CD4-positive, alpha-beta memory T cell (primary cell): ENCODE measurements at regions of chr2 and their contacts with region 1.

Region 1: DNA sequence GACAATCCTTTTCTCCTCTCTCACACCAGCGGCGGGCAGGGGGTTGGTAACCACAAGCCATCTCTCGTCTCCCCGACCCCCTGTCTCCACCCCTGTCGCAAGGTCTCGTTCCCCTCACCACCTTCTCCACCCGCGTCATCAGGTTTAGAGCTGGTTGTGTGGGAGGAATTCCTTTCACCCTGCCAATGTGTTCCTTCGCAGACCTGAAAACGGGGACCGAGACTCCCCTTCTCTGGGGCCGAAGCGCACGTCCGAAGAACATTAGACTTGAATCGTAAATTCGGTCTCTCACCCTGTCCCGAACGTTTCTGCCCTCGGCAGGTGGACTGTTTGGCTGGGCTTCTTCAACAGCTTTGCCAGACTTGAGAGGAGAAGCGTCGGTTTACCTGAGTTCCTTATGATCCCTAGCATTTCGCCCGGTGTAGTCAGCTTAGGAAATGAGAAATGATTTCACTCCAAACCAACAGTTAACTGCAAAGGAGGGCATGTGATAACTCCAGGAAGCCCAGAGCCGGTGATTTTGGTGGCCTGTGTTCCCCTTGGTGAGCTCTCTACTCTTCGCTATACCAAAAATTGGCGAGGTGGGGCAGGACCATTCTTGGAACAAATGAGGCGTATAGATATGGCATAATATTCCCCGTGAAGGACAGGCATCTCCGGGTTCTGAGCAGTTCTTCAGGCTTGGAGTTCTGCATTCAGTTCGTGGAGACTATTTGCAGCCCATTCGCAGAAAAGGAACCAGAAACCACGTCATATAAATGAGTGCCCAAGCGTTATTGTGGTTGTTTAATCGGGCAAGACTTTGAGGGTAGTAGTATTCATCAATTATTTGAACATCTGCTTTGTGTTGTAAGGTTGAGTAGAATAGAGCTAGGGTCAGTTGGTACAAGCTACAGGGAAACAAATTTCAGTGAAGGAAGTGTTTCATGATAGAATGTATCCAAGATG is 694 bp downstream of the CFAP36 start:
- DNase-seq: peak in 2 of 5 donors; percentile 30 to 67
- H3K4me3 ChIP-seq: peak overlapping the region; percentile 69 to 84
- H3K4me3 Mint-ChIP-seq: peak overlapping the region; percentile 95 to 100 (median 98)
- H3K27ac ChIP-seq: peak overlapping the region; percentile 83
- H3K27ac Mint-ChIP-seq: peak overlapping the region; percentile 98 to 100 (median 99)
- H3K4me1 ChIP-seq: peaks cover 22% of the 10 kb centered on the region
- H3K4me1 Mint-ChIP-seq: peaks cover 11 to 23% (median 19%) of the 10 kb centered on the region in 4 donors
- H3K27me3 ChIP-seq: no peaks in the 10 kb centered on the region
- H3K27me3 Mint-ChIP-seq: no peaks in the 10 kb centered on the region

Region 2: GRCh38 chr2:53970724-53971602 is 1549.2 kb before region 1 on chr2 and contains the start of gene PSME4:
- CTCF ChIA-PET with region 1: no interaction called
- POLR2A ChIA-PET with region 1: no interaction called
- intact Hi-C with region 1: loop called (anchors 2 kb)
- DNase-seq: peak; percentile 89 to 94 (median 89)
- H3K4me3 ChIP-seq: peak within 1 kb of the TSS; percentile 97 to 99
- H3K4me3 Mint-ChIP-seq: peak within 1 kb of the TSS; percentile 89 to 100 (median 96)
- H3K27ac ChIP-seq: peak within 1 kb of the TSS; percentile 90
- H3K27ac Mint-ChIP-seq: peak within 1 kb of the TSS; percentile 93 to 99 (median 98)
- H3K4me1 ChIP-seq: peaks cover 51% of the 10 kb centered on the region
- H3K4me1 Mint-ChIP-seq: peaks cover 41 to 67% (median 48%) of the 10 kb centered on the region in 4 donors
- H3K27me3 ChIP-seq: no peaks in the 10 kb centered on the region
- H3K27me3 Mint-ChIP-seq: no peaks in the 10 kb centered on the region
- total RNA-seq, gene PSME4: 41.7 to 49.9 TPM

Region 3: DNA sequence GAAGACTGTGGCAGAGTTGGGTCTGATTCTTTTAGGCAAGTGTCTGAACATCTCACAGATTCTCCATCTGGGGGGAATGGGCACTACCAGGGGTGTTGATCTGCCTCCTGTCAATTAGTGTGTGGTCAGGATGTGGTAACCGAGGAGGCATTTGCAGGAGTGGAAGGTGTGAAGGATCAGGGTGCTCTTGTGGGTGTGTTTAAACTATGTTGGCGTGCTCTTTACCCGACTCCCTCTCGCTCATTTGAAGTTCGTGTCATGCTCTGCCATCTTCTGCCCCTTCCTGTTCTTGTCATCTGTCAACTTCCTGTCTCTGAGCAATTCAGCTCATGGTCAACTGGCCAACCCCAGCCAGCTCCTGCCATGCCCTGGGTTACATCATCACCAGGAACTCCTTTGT is 577.8 kb before region 1 on chr2:
- CTCF ChIA-PET with region 1: no interaction called
- POLR2A ChIA-PET with region 1: no interaction called
- intact Hi-C with region 1: no loop called
- DNase-seq: peak; percentile 45 to 66 (median 57)
- H3K4me3 ChIP-seq: no peak overlapping the region
- H3K4me3 Mint-ChIP-seq: no peak overlapping the region
- H3K27ac ChIP-seq: no peak overlapping the region
- H3K27ac Mint-ChIP-seq: no peak overlapping the region
- H3K4me1 ChIP-seq: peaks cover 22% of the 10 kb centered on the region
- H3K4me1 Mint-ChIP-seq: peaks cover 3 to 11% (median 5%) of the 10 kb centered on the region in 4 donors
- H3K27me3 ChIP-seq: no peaks in the 10 kb centered on the region
- H3K27me3 Mint-ChIP-seq: no peaks in the 10 kb centered on the region

Region 4: GRCh38 chr2:55223958-55224760 is 296.1 kb before region 1 on chr2:
- CTCF ChIA-PET with region 1: no interaction called
- POLR2A ChIA-PET with region 1: interaction called, 18 read pairs
- intact Hi-C with region 1: no loop called
- DNase-seq: peak in 2 of 5 donors; percentile 21 to 39
- H3K4me3 ChIP-seq: no peak overlapping the region
- H3K4me3 Mint-ChIP-seq: peak overlapping the region; percentile 79 to 90 (median 86)
- H3K27ac ChIP-seq: peak overlapping the region; percentile 84
- H3K27ac Mint-ChIP-seq: peak overlapping the region; percentile 85 to 95 (median 93)
- H3K4me1 ChIP-seq: peaks cover 40% of the 10 kb centered on the region
- H3K4me1 Mint-ChIP-seq: peaks cover 32 to 55% (median 41%) of the 10 kb centered on the region in 4 donors
- H3K27me3 ChIP-seq: no peaks in the 10 kb centered on the region
- H3K27me3 Mint-ChIP-seq: no peaks in the 10 kb centered on the region

Region 5: DNA sequence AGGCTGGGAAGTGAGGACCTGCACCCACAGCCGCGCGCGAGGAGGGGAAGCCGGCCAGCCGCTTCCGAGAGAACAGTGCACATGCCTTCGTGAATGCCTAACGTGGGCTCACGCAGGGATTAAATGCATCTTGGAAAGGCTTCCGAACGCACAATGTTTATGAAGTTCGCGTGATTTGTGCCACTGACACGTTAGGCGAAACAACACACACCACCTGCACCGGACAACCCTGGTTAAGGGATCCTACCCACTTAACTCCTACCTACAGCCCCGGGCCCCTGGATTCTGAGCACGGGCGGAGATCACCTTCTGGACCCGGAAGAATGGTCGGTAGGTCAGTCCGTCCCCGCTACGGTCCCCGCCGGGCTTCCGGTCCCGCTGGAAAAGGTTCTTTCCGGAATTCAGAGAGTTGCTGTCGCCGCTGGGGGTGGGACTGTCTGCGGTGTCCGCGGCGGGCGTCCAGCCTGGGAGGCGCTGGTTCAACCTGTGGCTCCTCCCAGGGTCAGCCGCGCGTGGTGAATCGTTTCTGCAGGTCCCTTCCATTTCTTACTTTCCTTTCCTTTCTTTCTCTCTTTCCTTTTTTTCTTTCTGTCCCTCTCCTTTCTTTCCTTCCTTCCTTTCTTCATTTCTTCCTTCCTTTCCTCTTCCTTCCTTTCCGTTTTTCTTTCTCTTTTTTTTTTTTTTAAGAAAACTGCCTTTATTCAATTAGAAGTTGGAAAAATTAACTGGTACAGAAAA is 251.1 kb before region 1 on chr2 and contains the start of gene MTIF2:
- CTCF ChIA-PET with region 1: no interaction called
- POLR2A ChIA-PET with region 1: interaction called, 17 read pairs
- intact Hi-C with region 1: no loop called
- DNase-seq: peak; percentile 79 to 87 (median 80)
- H3K4me3 ChIP-seq: peak within 1 kb of the TSS; percentile 71 to 74
- H3K4me3 Mint-ChIP-seq: peak within 1 kb of the TSS; percentile 86 to 98 (median 96)
- H3K27ac ChIP-seq: peak within 1 kb of the TSS; percentile 67
- H3K27ac Mint-ChIP-seq: peak within 1 kb of the TSS; percentile 86 to 98 (median 97)
- H3K4me1 ChIP-seq: peaks cover 21% of the 10 kb centered on the region
- H3K4me1 Mint-ChIP-seq: peaks cover 11 to 37% (median 20%) of the 10 kb centered on the region in 4 donors
- H3K27me3 ChIP-seq: no peaks in the 10 kb centered on the region
- H3K27me3 Mint-ChIP-seq: no peaks in the 10 kb centered on the region
- total RNA-seq, gene MTIF2: 33.1 to 38.6 TPM

Region 6: GRCh38 chr2:55530539-55531081 is 10.4 kb after region 1 on chr2:
- CTCF ChIA-PET with region 1: interaction called, 15 read pairs
- POLR2A ChIA-PET with region 1: interaction called, 118 read pairs
- intact Hi-C with region 1: loop called (anchors 1 kb)
- DNase-seq: peak; percentile 40 to 67 (median 52)
- H3K4me3 ChIP-seq: peak overlapping the region in 1 of 2 donors; percentile 25
- H3K4me3 Mint-ChIP-seq: peak overlapping the region in 7 of 8 donors; percentile 3 to 77 (median 54)
- H3K27ac ChIP-seq: peak overlapping the region; percentile 36
- H3K27ac Mint-ChIP-seq: peak overlapping the region; percentile 61 to 93 (median 87)
- H3K4me1 ChIP-seq: peaks cover 27% of the 10 kb centered on the region
- H3K4me1 Mint-ChIP-seq: peaks cover 21 to 32% (median 28%) of the 10 kb centered on the region in 4 donors
- H3K27me3 ChIP-seq: no peaks in the 10 kb centered on the region
- H3K27me3 Mint-ChIP-seq: no peaks in the 10 kb centered on the region

Region 7: DNA sequence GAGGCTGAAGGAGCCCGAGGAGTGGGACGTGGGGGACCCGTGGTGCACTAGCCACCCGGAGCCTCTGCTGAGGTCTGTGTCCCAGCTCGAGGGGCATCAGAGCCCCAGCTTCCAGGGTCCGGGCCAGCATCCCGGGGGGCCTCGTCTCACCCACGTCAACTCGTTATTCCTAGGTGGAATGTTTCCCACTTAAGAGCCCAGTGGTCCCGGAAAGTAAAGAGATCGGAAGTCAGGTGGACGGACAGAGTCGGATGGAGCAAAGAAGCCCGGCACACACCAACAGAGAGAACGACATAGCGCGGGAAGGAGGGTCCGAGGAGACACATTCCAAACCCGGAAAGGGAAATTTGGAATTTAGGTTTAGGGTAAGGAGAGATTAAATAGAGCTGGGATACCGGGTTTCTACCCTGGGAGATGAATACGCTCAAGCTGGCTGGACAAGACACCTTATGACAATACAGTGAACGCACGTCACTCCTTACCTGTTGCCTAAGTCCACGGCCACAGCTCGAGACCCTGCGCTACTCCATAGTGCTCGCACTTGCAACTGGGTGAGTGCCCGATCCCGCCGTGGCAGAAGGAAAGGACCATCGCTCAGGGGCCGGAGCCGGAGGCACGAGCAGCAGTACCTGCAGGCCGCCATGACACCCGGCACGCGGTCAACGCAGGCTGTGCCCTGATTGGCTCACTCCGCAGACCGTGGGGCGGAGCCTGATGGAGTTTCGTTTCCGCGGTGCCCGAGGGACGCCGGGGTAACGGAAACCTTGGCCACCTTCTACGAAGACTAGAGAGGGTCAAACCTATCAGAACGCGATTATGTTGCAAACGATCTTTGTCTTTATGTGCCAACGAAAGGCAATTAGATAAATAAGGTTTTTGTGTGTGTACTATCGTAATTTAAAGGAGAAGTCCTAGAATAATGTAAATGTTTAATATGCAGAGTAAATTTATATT is 173.2 kb after region 1 on chr2 and contains the start of gene PNPT1:
- CTCF ChIA-PET with region 1: no interaction called
- POLR2A ChIA-PET with region 1: interaction called, 10 read pairs
- intact Hi-C with region 1: loop called (anchors 1 kb)
- DNase-seq: peak; percentile 89 to 91 (median 89)
- H3K4me3 ChIP-seq: peak within 1 kb of the TSS; percentile 78 to 94
- H3K4me3 Mint-ChIP-seq: peak within 1 kb of the TSS; percentile 96 to 98 (median 98)
- H3K27ac ChIP-seq: peak within 1 kb of the TSS; percentile 74
- H3K27ac Mint-ChIP-seq: peak within 1 kb of the TSS; percentile 90 to 97 (median 93)
- H3K4me1 ChIP-seq: peaks cover 16% of the 10 kb centered on the region
- H3K4me1 Mint-ChIP-seq: peaks cover 29 to 44% (median 32%) of the 10 kb centered on the region in 4 donors
- H3K27me3 ChIP-seq: no peaks in the 10 kb centered on the region
- H3K27me3 Mint-ChIP-seq: peaks cover 0 to under 1% of the 10 kb centered on the region in 2 donors
- total RNA-seq, gene PNPT1: 21.9 to 26.5 TPM